ENCODE measurements at regions of chr5 and their contacts with region 1.

Region 1: DNA sequence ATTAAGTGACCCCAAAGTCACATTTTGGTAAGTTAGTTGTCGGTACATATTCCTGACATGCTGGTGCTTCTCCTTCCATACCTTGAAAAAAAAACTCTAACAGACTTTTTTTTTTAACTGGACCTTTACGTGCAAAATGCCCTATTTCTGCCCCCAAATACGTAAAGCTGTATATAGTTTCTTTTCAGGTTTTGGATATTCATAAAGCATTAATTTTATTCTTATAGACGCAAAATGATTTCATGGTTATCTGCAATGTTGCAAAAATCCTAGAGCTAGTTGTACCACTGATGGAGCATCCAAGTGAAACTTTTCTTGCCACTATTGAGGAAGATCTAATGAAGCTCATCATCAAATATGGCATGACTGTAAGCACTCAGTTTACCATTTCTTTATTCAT is 167.6 kb downstream of the NIPBL start:
- DNase-seq: no peak
- ATAC-seq: no peak
- H3K4me3 ChIP-seq: no peak overlapping the region
- H3K4me3 Mint-ChIP-seq: no peak overlapping the region
- H3K27ac ChIP-seq: no peak overlapping the region
- H3K27ac Mint-ChIP-seq: no peak overlapping the region
- H3K4me1 ChIP-seq: no peaks in the 10 kb centered on the region
- H3K4me1 Mint-ChIP-seq: no peaks in the 10 kb centered on the region
- H3K27me3 ChIP-seq: no peaks in the 10 kb centered on the region
- H3K27me3 Mint-ChIP-seq: no peaks in the 10 kb centered on the region

Region 2: DNA sequence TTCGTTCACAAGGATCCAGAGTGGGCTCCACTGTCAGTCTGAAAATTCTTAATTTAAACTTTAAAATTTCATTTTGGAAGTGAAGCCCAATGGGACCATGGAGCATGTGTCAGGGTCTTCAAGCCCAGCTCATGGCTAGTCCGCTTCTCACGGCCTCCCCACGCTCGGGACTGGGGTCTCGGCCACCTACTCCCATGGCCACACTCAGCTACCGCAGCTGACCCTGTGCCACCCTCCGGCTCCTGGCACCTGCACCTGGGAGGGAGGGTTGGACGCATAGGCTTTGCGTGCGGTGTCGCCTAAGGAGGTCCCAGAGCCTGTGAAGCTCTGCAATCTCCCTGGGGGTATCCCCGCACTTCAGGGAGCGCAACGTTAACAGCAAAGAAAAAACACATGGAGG is 1638.2 kb before region 1 on chr5:
- CTCF ChIA-PET with region 1: no interaction called
- POLR2A ChIA-PET with region 1: no interaction called
- DNase-seq: no peak
- ATAC-seq: no peak
- H3K4me3 ChIP-seq: no peak overlapping the region
- H3K4me3 Mint-ChIP-seq: no peak overlapping the region
- H3K27ac ChIP-seq: no peak overlapping the region
- H3K27ac Mint-ChIP-seq: no peak overlapping the region
- H3K4me1 ChIP-seq: no peaks in the 10 kb centered on the region
- H3K4me1 Mint-ChIP-seq: no peaks in the 10 kb centered on the region
- H3K27me3 ChIP-seq: peaks cover 0 to 2% of the 10 kb centered on the region in 2 experiments
- H3K27me3 Mint-ChIP-seq: peaks cover 4 to 11% of the 10 kb centered on the region in 2 donors

Region 3: DNA sequence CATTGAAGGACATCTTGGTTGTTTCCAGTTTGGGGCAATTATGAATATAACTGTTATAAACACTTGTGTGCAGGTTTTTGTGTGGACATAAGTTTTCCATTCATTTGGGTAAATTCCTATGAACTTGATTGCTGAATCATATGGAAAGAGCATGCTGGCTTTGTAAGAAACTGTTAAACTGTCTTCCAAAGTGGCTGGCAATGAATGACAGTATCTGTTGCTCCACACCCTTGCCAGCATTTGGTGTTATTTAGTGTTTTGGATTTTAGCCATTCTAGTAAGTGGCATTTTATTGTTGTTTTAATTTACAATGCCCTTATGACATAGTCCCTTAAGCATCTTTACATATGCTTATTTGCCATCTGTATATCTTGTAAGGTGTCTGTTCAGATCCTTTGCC is 947.6 kb before region 1 on chr5:
- CTCF ChIA-PET with region 1: interaction called in 1 of 2 experiments, 12 read pairs
- POLR2A ChIA-PET with region 1: no interaction called
- DNase-seq: no peak
- ATAC-seq: no peak
- H3K4me3 ChIP-seq: no peak overlapping the region
- H3K4me3 Mint-ChIP-seq: no peak overlapping the region
- H3K27ac ChIP-seq: no peak overlapping the region
- H3K27ac Mint-ChIP-seq: no peak overlapping the region
- H3K4me1 ChIP-seq: no peaks in the 10 kb centered on the region
- H3K4me1 Mint-ChIP-seq: no peaks in the 10 kb centered on the region
- H3K27me3 ChIP-seq: no peaks in the 10 kb centered on the region
- H3K27me3 Mint-ChIP-seq: no peaks in the 10 kb centered on the region